ENCODE measurements at regions of chr1 and their contacts with region 1.

Region 1: DNA sequence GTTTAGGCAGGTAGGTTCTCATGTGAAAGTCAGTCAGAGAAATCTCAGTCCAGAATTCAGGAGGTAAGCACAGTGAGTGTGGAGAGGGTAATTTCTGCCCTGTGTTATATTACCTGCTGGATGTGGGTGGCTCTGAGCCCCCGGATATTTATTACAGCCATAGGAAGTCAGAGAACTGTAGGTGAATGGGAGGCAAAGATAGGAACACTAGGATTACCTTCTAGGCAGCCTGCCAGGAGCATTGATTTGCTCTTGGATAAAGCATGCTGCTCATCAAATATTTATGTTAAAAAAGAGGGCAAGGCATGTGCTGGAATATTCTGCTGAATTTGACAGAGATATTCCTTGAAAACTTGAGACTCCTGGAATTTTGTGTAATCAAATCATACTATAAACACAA is 8.5 kb downstream of the GNG12 start:
- ATAC-seq: no peak
- H3K4me3 ChIP-seq: no peak overlapping the region
- H3K27ac ChIP-seq: no peak overlapping the region
- H3K4me1 ChIP-seq: no peaks in the 10 kb centered on the region

Region 2: DNA sequence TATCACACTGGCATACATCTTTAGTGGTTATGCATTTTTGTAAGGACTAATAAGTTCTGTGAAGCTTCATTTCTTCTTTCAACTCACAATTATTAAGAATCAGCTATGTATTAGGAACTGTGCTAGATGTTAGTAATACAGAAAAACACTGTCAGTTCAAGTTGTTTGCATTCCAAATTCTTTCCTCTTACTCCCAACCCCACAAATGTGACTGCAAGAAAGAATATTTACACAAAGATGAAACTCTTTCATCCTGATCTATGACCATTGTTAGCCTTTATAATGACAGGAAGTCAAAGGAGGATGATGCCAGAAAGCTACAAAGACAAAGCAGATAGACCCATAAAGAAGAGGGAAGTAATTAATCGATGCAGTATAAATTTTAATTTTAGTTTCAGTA is 160.7 kb before region 1 on chr1:
- in situ Hi-C with region 1: no loop called
- ATAC-seq: peak in 1 of 8 experiments; percentile 12
- H3K4me3 ChIP-seq: no peak overlapping the region
- H3K27ac ChIP-seq: no peak overlapping the region
- H3K4me1 ChIP-seq: no peaks in the 10 kb centered on the region

Region 3: GRCh38 chr1:67771152-67771551 is 53.6 kb before region 1 on chr1:
- in situ Hi-C with region 1: loop called in 1 of 9 experiments (anchors 10 kb)
- ATAC-seq: peak in 1 of 8 experiments; percentile 6
- H3K4me3 ChIP-seq: no peak overlapping the region
- H3K27ac ChIP-seq: no peak overlapping the region
- H3K4me1 ChIP-seq: peaks cover 7 to 9% of the 10 kb centered on the region in 2 donors